ENCODE measurements at regions of chr2 and their contacts with region 1.

Region 1: DNA sequence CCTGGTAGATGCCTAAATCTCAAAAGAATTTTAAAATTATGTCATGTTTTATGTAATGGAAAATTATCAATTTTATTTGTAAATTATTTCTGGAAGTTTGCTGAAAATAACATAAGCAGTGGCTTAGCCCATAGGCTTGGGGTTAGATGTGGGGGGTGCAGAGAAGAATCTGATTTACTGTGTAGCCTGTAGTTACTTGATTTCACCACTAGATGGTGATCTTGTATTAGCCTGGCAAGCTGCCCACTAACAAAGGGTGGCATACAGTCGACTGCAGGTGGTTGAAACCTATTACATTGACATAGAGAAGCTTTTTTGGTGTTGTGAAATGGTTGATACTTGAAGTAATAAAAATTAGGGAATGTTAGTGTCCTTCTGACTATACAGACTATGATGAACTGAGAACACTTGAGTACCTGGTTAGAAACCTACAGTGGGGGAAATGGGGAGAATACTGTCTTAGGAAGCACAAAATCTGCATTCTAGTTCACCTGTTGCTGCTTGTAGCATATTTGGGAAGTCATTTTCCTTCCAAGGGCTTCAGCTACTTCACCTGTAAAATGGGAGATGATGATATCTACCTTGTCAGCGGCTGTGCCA is 191.0 kb upstream of the LHCGR start:
- DNase-seq: peak; percentile 73
- H3K4me3 Mint-ChIP-seq: no peak overlapping the region
- H3K27ac Mint-ChIP-seq: no peak overlapping the region
- H3K4me1 Mint-ChIP-seq: no peaks in the 10 kb centered on the region
- H3K27me3 Mint-ChIP-seq: no peaks in the 10 kb centered on the region

Region 2: GRCh38 chr2:49490710-49491109 is 544.2 kb after region 1 on chr2:
- intact Hi-C with region 1: loop called (anchors 2 kb)
- DNase-seq: peak; percentile 58
- H3K4me3 Mint-ChIP-seq: no peak overlapping the region
- H3K27ac Mint-ChIP-seq: no peak overlapping the region
- H3K4me1 Mint-ChIP-seq: no peaks in the 10 kb centered on the region
- H3K27me3 Mint-ChIP-seq: no peaks in the 10 kb centered on the region

Region 3: DNA sequence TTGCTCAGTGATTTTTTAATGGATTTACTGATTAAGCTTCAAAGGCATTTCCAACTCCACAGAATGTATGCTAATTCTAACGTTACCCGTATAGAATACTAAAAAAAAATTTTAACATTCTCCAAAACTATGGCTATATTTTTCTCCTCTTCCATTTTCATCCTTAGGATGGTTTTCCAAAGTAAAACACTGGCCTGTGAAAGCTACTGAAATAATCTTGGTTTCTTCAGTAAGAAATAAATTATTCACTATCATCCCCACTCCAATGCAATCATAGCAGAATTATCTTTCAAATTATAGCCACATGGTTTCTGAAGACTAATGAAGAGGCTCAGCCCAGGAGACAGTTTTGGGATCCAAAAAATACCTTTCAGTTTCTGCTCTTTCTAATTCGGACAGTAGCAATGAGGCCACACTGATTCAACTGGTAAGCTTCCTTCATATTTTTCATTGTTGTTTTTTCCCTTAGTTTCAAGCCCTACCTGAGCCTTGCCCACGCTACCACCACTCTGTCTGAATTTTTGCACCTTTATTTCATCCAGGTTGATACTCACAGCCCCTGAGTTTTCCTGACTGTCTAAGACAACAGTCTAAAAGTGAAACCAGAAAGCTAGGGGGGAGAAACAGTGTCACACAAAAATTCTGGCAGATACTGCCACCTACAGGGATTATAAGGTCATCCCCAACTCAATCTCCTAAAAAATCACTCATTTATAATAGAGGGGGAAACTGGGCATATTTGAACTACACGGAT is 1197.5 kb after region 1 on chr2:
- intact Hi-C with region 1: loop called (anchors 1 kb)
- DNase-seq: peak; percentile 67
- H3K4me3 Mint-ChIP-seq: peak overlapping the region; percentile 76
- H3K27ac Mint-ChIP-seq: peak overlapping the region; percentile 43
- H3K4me1 Mint-ChIP-seq: peaks cover 5% of the 10 kb centered on the region
- H3K27me3 Mint-ChIP-seq: no peaks in the 10 kb centered on the region

Region 4: GRCh38 chr2:50401772-50402653 is 1455.5 kb after region 1 on chr2:
- intact Hi-C with region 1: loop called (anchors 1 kb)
- DNase-seq: peak; percentile 77
- H3K4me3 Mint-ChIP-seq: no peak overlapping the region
- H3K27ac Mint-ChIP-seq: no peak overlapping the region
- H3K4me1 Mint-ChIP-seq: no peaks in the 10 kb centered on the region
- H3K27me3 Mint-ChIP-seq: no peaks in the 10 kb centered on the region

Region 5: DNA sequence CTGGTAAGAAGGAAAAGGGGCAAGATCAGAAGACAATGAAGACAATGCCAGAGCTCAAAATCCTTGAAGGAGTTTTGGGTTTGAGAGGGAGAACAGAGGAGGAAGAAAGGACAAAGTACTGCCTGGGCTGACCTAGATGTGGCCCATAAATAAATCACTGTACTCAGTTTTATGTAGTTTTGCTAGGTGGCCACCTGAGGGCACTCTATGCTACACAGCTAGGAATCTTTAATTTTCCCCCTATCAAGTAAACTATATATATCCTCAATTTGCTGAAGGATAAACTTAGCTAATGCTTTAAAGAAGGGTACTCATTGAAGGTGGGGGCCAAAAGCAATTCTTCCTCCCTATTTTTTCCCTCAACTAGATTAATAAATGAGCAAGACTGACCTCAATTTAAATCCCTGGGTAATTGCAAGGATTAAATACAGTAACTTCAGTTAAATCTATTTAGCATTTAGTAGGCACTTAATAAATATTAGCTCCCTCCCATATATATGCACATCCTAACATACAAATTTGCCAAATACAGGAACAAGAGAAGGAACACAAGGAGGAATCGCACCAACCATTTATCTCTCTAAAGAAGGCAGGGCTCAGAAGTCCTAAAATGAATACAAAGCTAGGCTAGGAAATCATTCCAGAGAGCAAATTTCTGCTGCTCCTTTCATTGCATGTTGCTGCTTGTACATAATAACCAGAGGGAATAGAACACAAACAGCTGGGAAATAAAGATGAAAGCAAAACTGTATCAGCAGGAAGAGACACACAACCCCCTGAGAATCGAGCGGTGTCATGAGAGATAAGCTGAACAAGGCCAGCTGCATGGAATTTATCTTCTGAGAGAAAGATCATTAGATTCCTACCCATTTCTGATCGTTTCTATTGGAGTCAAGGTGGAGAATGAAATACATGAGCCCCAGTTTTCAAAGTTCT is 1545.3 kb after region 1 on chr2:
- intact Hi-C with region 1: loop called (anchors 1 kb)
- DNase-seq: peak; percentile 57
- H3K4me3 Mint-ChIP-seq: no peak overlapping the region
- H3K27ac Mint-ChIP-seq: no peak overlapping the region
- H3K4me1 Mint-ChIP-seq: no peaks in the 10 kb centered on the region
- H3K27me3 Mint-ChIP-seq: no peaks in the 10 kb centered on the region

Measured in activated CD4-positive, alpha-beta T cell treated with anti-CD3 and anti-CD28 coated beads, Interleukin-2, amount 10 ng/mL, durations not matched to agents 24 days and 14 days (primary cell).